Adrenal gland (tissue), 19 donors: ENCODE measurements at regions of chr11 and their contacts with region 1.

Region 1: GRCh38 chr11:60615497-60615896 is 83.9 kb upstream of the MS4A8 start:
- DNase-seq: no peak
- H3K4me3 ChIP-seq: no peak overlapping the region
- H3K27ac ChIP-seq: no peak overlapping the region
- H3K4me1 ChIP-seq: no peaks in the 10 kb centered on the region
- H3K27me3 ChIP-seq: peaks cover 7% of the 10 kb centered on the region
- CTCF ChIP-seq: no peak
- POLR2A ChIP-seq: no peak

Region 2: GRCh38 chr11:59802639-59803176 is 812.8 kb before region 1 on chr11:
- intact Hi-C with region 1: no loop called
- DNase-seq: peak in 4 of 7 donors; percentile 38 to 63 (median 52)
- H3K4me3 ChIP-seq: no peak overlapping the region
- H3K27ac ChIP-seq: no peak overlapping the region
- H3K4me1 ChIP-seq: peaks cover 0 to 6% of the 10 kb centered on the region in 2 donors
- H3K27me3 ChIP-seq: no peaks in the 10 kb centered on the region
- CTCF ChIP-seq: peak; percentile 33 to 88 (median 71)
- POLR2A ChIP-seq: no peak

Region 3: GRCh38 chr11:60265373-60266214 is 349.9 kb before region 1 on chr11:
- intact Hi-C with region 1: loop called in 1 of 2 experiments (anchors 5 kb)
- DNase-seq: peak in 2 of 7 donors; percentile 33 to 38
- H3K4me3 ChIP-seq: no peak overlapping the region
- H3K27ac ChIP-seq: no peak overlapping the region
- H3K4me1 ChIP-seq: no peaks in the 10 kb centered on the region
- H3K27me3 ChIP-seq: no peaks in the 10 kb centered on the region
- CTCF ChIP-seq: peak; percentile 69 to 80 (median 72)
- POLR2A ChIP-seq: no peak

Region 4: DNA sequence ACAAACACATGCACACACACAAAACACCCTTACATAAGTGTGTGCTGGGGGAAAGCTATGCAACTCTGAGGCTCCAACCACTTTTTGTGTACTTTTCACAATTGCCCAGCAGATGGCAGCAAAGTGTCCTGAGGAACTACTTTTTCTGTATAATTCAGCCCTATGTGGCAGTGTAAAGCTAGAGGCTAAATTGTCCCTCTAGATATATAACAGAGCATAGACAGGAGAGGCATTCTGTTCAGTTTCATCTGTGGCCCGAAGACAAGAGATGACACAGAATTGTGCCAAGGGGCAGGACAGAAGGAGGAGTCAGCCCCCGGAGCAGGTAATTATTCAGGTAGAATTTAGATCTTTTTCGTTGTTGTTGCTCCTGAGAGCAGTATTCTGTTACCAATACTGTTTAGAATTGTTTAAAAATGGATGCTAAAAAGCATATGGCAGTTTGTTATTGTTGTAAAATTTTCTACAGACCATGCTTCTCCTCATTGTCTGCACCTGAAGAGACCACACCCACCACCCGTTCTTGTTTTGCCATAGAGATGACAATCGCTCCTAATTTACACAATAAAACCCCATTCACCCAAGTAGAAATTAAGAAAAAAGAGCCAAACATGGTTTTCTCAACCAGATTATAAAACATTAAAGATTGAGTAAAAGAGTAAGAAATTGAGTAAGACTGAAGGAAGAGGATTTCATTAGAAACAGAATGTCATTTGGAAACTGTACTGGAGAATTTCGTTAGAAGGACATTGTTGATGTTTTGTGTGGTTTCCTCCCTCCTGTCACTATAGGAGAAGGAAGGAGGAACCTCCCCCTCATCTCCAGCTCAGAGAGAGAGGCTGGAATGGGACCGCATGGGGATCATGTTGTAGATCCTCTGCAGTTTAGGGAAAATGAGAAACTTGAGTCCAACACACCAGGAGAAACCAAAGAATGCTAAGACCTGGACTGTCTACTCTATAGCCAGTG is 251.7 kb before region 1 on chr11:
- intact Hi-C with region 1: loop called (anchors 5 kb)
- DNase-seq: peak; percentile 52 to 84 (median 67)
- H3K4me3 ChIP-seq: no peak overlapping the region
- H3K27ac ChIP-seq: peak overlapping the region in 2 of 5 donors; percentile 33 to 62
- H3K4me1 ChIP-seq: no peaks in the 10 kb centered on the region
- H3K27me3 ChIP-seq: no peaks in the 10 kb centered on the region
- CTCF ChIP-seq: peak; percentile 57 to 71 (median 65)
- POLR2A ChIP-seq: no peak

Region 5: GRCh38 chr11:60831143-60831500 is 215.6 kb after region 1 on chr11:
- intact Hi-C with region 1: no loop called
- DNase-seq: peak; percentile 76 to 96 (median 90)
- H3K4me3 ChIP-seq: no peak overlapping the region
- H3K27ac ChIP-seq: no peak overlapping the region
- H3K4me1 ChIP-seq: peaks cover 0 to 5% of the 10 kb centered on the region in 2 donors
- H3K27me3 ChIP-seq: no peaks in the 10 kb centered on the region
- CTCF ChIP-seq: peak; percentile 87 to 95 (median 90)
- POLR2A ChIP-seq: no peak